ENCODE measurements at regions of chr10 and their contacts with region 1.

Region 1: DNA sequence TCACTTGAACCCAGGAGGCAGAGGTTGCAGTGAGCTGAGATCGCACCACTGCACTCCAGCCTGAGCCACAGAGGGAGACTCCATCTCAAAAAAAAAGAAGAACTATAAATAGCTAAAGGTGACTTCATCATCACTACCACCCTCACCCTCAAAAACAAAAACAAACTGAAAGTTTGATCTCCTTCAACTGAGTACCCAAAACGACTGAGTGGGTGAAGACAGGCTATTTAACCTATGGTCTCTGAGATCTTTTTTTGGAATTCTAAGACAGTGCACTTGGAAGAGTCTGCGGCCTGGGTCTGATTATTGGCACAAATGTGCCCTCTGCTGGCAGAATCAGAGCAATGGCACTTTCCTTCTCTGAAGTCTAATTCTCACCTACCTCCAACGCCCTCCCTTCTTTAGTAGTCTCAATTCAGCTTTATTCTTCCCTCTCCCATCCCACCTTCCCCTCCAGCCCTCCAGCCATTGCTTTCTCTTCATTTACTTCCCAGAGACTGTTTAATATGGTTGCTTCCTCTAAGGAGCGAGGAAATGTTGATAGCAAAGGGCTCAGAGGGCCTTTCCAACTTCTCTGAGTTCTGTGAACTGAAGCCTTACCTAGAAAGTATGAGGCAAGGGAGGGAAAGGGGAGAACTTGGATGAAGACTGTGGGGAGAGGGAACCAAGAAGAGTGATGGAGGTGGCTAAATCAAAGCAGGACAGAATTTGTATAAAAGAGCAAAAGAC is 2.9 kb upstream of the MYOZ1 start:
- DNase-seq: peak; percentile 84
- H3K4me3 Mint-ChIP-seq: peak overlapping the region; percentile 53
- H3K27ac Mint-ChIP-seq: peak overlapping the region; percentile 30
- H3K4me1 Mint-ChIP-seq: peaks cover 18% of the 10 kb centered on the region
- H3K27me3 Mint-ChIP-seq: peaks cover 7% of the 10 kb centered on the region

Region 2: GRCh38 chr10:73263948-73264347 is 380.2 kb before region 1 on chr10:
- intact Hi-C with region 1: loop called (anchors 5 kb)
- DNase-seq: no peak
- H3K4me3 Mint-ChIP-seq: no peak overlapping the region
- H3K27ac Mint-ChIP-seq: no peak overlapping the region
- H3K4me1 Mint-ChIP-seq: peaks cover 4% of the 10 kb centered on the region
- H3K27me3 Mint-ChIP-seq: peaks cover 14% of the 10 kb centered on the region

Region 3: GRCh38 chr10:73529089-73529832 is 114.9 kb before region 1 on chr10:
- intact Hi-C with region 1: loop called (anchors 1 kb)
- DNase-seq: peak; percentile 88
- H3K4me3 Mint-ChIP-seq: no peak overlapping the region
- H3K27ac Mint-ChIP-seq: no peak overlapping the region
- H3K4me1 Mint-ChIP-seq: no peaks in the 10 kb centered on the region
- H3K27me3 Mint-ChIP-seq: no peaks in the 10 kb centered on the region

Region 4: GRCh38 chr10:73559590-73559989 is 84.6 kb before region 1 on chr10:
- intact Hi-C with region 1: no loop called
- DNase-seq: no peak
- H3K4me3 Mint-ChIP-seq: no peak overlapping the region
- H3K27ac Mint-ChIP-seq: no peak overlapping the region
- H3K4me1 Mint-ChIP-seq: no peaks in the 10 kb centered on the region
- H3K27me3 Mint-ChIP-seq: peaks cover 5% of the 10 kb centered on the region

Measured in activated CD4-positive, alpha-beta T cell treated with anti-CD3 and anti-CD28 coated beads, Interleukin-2, amount 10 ng/mL, durations not matched to agents 24 days and 14 days (primary cell).